ENCODE measurements at regions of chr13 and their contacts with region 1.

Region 1: DNA sequence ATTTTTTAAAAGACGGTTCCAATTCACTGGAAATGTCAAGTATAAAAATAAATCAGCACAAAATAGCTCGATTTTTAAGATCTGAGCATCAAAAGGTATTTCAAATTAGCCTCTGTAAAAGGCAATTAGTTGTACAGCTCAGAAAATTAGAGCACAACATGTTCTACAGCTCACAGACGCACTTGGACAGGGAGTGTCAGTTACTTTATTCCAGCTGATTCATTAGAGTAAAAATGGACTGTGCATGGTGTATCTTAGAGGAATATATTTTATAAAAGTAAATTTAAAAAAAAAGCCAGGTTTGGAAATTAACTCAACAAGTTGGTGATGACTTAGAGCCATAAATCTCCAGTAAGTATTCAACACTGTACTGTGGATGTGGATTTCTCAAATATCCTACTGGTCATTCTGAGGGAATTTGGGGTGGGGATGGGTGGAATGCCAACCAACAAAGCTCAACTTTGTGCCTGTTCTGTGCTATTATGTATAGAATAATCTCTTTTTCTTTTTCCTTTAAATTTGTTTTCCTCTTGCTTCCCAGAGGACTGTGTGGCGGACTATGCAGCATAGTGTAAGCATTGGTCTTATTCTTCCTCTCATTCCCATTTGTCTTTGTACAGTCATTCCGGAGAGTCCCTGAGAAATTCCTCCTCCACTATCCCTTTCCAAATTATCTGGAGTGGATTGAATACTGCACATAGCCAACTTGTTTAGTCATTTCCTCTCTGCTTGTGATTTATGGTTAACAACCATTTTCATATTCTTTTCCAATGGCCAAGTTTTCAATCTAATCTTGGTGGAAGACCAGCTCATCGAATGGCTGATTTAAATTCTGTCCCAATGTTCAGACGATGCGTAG is 169.3 kb downstream of the DCT start:
- DNase-seq: no peak
- H3K4me3 ChIP-seq: no peak overlapping the region
- H3K27ac ChIP-seq: no peak overlapping the region
- H3K4me1 ChIP-seq: no peaks in the 10 kb centered on the region
- H3K27me3 ChIP-seq: no peaks in the 10 kb centered on the region

Region 2: DNA sequence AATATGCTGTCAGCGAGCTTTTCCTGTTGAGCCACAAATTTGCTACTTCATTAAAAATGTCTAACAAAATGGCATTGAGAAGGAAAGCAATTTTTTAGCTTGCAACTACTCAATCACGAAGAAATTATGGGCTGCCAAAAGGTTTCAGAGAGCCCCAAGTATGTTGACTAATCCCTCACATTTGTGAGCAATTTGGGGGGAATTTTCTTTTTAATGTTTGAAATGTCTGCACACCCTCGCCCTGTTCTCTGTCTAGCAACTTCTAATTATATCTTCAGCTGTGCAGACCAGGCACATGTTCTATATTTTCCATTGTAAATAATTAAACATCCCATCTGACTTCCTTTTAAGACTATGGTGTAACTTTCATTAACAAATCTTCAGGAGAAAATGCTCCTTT is 23.6 kb before region 1 on chr13:
- CTCF ChIA-PET with region 1: interaction called, 12 read pairs
- POLR2A ChIA-PET with region 1: interaction called, 6 read pairs
- DNase-seq: no peak
- H3K4me3 ChIP-seq: no peak overlapping the region
- H3K27ac ChIP-seq: no peak overlapping the region
- H3K4me1 ChIP-seq: no peaks in the 10 kb centered on the region
- H3K27me3 ChIP-seq: no peaks in the 10 kb centered on the region

Measured in common myeloid progenitor, CD34-positive (primary cell).